ENCODE measurements at regions of chr1 and their contacts with region 1.

Region 1: GRCh38 chr1:45359882-45360513 is 19.8 kb upstream of the MUTYH start:
- DNase-seq: peak in 1 of 3 donors; percentile 42
- ATAC-seq: peak; percentile 72 to 82 (median 74)
- H3K4me3 ChIP-seq: no peak overlapping the region
- H3K27ac ChIP-seq: peak overlapping the region; percentile 48 to 67 (median 59)
- H3K4me1 ChIP-seq: peaks cover 0 to 22% (median 8%) of the 10 kb centered on the region in 4 donors
- H3K27me3 ChIP-seq: no peaks in the 10 kb centered on the region
- CTCF ChIP-seq: peak; percentile 66 to 76 (median 68)
- POLR2A ChIP-seq: no peak

Region 2: DNA sequence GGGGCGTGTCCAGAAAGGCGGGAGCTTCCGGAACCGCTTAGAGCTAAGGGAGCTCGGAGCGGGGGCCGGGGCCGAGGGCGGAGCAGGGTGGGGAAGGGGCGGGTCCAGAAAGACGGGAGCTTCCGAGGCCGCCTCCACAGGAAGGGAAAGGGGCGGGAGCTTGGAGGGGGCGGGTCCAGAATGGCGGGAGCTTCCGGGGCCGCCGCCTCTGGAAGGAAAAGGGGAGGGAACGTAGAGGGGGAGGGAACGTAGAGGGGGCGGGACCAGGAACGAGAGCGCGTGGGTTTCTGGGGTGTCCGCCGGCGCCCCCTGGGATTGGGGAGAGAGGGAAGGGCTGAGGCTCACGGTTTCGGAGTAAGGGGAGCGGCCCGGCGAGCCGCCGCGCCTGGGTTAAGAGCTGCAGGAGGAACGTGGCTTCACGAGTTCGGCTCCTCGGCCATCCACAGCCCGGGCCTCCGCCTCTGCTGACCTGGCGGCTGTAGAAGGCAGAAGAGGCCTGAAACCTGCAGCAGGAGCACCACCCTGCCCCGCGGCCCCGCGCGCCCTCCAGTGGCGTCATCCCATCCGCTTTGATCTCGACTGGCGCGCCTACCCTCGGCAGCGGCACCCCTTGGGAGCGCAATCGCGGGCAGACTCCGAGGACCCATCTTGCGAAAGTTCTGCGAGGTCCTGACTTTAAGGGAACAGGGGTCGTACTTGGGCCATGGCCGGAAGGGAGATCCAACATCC is 56.3 kb before region 1 on chr1:
- intact Hi-C with region 1: no loop called
- DNase-seq: peak; percentile 99
- ATAC-seq: peak; percentile 93 to 96 (median 94)
- H3K4me3 ChIP-seq: peak overlapping the region; percentile 86 to 93 (median 91)
- H3K27ac ChIP-seq: peak overlapping the region; percentile 90 to 93 (median 91)
- H3K4me1 ChIP-seq: peaks cover 0 to 6% (median 2%) of the 10 kb centered on the region in 4 donors
- H3K27me3 ChIP-seq: no peaks in the 10 kb centered on the region
- CTCF ChIP-seq: peak; percentile 61 to 72 (median 67)
- POLR2A ChIP-seq: peak; percentile 82

Region 3: DNA sequence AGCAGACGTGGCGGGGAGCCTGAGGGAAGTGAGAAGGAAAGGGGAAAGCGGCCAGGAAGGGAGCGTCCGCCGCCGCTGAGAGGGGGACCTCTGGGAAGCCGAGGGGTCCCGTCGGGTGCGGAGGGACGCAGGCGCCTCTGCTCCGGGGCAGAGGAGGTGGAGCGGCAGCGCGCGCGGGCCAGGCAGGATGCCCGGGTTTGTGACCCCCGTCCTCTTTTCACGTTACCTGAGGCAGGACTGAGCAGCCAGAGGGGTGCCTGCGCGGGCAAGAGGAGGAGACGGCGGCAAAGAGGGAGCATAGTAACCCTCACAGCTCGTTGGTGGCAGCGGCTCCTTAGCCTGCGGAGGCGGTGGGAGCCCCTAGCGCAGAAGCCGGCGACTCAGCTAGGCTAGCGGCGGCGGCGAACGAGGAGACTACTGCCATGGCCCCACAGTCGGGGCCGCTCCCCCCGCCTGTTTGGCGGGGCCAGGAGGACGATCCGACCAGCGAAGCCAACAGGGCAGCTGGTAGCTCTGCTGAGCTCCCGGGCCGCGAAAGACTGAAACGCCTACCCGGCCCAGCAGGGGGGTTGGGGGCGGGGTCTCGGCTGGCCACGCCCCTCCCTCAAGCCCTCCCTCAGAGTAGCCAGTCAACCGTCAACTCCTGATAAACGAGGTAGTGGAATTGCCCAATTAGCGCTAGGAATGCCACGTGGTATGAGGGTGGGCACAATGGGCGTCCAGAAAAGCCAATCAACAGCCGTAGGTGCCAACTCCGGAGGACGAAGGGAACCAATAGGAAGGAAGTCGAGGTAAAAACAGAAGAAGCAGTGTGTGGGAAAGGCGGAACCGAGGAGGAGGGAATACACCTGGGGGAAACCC is 130.9 kb after region 1 on chr1 and contains the start of gene TESK2:
- intact Hi-C with region 1: loop called (anchors 5 kb)
- DNase-seq: peak; percentile 95 to 99 (median 97)
- ATAC-seq: peak; percentile 94 to 97 (median 96)
- H3K4me3 ChIP-seq: peak within 1 kb of the TSS; percentile 61 to 94 (median 79)
- H3K27ac ChIP-seq: peak within 1 kb of the TSS; percentile 71 to 89 (median 81)
- H3K4me1 ChIP-seq: peaks cover 0 to 16% (median 0%) of the 10 kb centered on the region in 4 donors
- H3K27me3 ChIP-seq: no peaks in the 10 kb centered on the region
- CTCF ChIP-seq: peak in 1 of 4 donors; percentile 47
- POLR2A ChIP-seq: peak; percentile 95
- total RNA-seq, gene TESK2: 2.7 to 5.5 (median 4.3) TPM

Region 4: DNA sequence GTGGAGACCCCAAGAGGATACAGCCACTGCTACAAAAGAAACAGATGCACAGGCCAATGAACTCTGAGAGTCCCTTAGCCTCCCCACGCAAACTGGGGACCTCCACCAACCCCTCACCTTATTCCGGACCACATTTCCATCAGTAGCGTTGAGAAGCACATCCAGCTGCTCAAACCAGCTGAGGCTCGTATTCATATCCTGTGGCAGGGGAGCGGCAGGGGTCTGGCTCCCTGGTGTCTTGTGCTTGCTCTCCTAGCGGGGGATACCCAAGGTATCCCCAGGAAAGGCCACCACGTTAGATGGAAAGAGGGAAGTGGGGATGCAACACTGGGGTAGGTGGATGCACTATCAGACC is 139.4 kb after region 1 on chr1:
- intact Hi-C with region 1: loop called (anchors 5 kb)
- DNase-seq: no peak
- ATAC-seq: no peak
- H3K4me3 ChIP-seq: peak overlapping the region; percentile 44 to 76 (median 63)
- H3K27ac ChIP-seq: peak overlapping the region in 2 of 3 donors; percentile 39 to 45
- H3K4me1 ChIP-seq: peaks cover 0 to 30% (median 14%) of the 10 kb centered on the region in 4 donors
- H3K27me3 ChIP-seq: no peaks in the 10 kb centered on the region
- CTCF ChIP-seq: no peak
- POLR2A ChIP-seq: no peak

Region 5: GRCh38 chr1:45569962-45570581 is 210.1 kb after region 1 on chr1:
- intact Hi-C with region 1: loop called in 1 of 2 experiments (anchors 10 kb)
- DNase-seq: peak in 2 of 3 donors; percentile 47 to 73
- ATAC-seq: peak; percentile 86 to 95 (median 90)
- H3K4me3 ChIP-seq: no peak overlapping the region
- H3K27ac ChIP-seq: no peak overlapping the region
- H3K4me1 ChIP-seq: no peaks in the 10 kb centered on the region
- H3K27me3 ChIP-seq: no peaks in the 10 kb centered on the region
- CTCF ChIP-seq: peak; percentile 95 to 98 (median 98)
- POLR2A ChIP-seq: no peak

Region 6: DNA sequence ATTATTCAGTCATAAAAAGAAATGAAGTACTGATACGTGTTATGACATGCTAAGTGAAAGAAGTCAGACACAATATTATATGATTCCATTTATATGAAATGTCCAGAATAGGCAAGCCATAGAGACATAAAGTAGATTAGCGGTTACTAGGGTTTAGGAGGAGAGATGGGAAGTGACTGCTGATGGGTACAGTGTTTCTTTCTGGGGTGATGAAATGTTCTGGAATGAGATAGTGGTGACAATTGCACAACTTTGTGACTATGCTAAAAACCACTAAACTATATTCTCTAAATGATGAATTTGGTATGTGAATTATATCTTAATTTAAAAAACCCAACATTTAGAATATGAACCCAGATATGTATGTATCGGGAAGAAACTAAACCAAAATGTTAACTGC is 362.8 kb after region 1 on chr1:
- intact Hi-C with region 1: no loop called
- DNase-seq: no peak
- ATAC-seq: peak; percentile 48 to 77 (median 61)
- H3K4me3 ChIP-seq: no peak overlapping the region
- H3K27ac ChIP-seq: no peak overlapping the region
- H3K4me1 ChIP-seq: no peaks in the 10 kb centered on the region
- H3K27me3 ChIP-seq: no peaks in the 10 kb centered on the region
- CTCF ChIP-seq: no peak
- POLR2A ChIP-seq: no peak

Region 7: DNA sequence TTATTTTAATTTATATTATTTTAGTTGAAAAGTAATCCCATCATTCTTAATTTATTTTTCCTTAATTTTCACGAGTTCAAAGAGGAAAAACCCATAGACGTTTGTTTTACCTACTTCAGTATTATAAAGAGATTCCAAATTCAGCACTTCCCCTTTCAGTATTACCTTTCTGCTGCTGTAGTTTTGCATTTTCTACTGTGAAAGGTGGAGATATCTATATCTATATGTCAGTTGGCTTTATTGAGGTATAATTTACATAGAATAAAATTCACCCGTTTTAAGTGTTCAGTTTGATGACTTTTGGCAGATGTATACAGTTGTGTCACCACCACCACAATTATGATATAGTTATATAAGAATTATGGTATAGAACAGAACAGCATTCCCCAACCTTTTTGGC is 476.5 kb after region 1 on chr1:
- intact Hi-C with region 1: no loop called
- DNase-seq: no peak
- ATAC-seq: no peak
- H3K4me3 ChIP-seq: no peak overlapping the region
- H3K27ac ChIP-seq: no peak overlapping the region
- H3K4me1 ChIP-seq: no peaks in the 10 kb centered on the region
- H3K27me3 ChIP-seq: no peaks in the 10 kb centered on the region
- CTCF ChIP-seq: no peak
- POLR2A ChIP-seq: no peak

Measured in right lobe of liver (tissue), 6 donors.